Activated CD4-positive, alpha-beta T cell treated with anti-CD3 and anti-CD28 coated beads for 36 hours (primary cell): ENCODE measurements at regions of chr17 and their contacts with region 1.

Region 1: GRCh38 chr17:65100316-65101140 is 36.6 kb upstream of the RGS9 start:
- DNase-seq: peak; percentile 87
- ATAC-seq: peak; percentile 70
- H3K4me3 Mint-ChIP-seq: peak overlapping the region; percentile 78
- H3K27ac Mint-ChIP-seq: peak overlapping the region; percentile 96
- H3K4me1 Mint-ChIP-seq: peaks cover 24% of the 10 kb centered on the region
- H3K27me3 Mint-ChIP-seq: peaks cover 2% of the 10 kb centered on the region

Region 2: DNA sequence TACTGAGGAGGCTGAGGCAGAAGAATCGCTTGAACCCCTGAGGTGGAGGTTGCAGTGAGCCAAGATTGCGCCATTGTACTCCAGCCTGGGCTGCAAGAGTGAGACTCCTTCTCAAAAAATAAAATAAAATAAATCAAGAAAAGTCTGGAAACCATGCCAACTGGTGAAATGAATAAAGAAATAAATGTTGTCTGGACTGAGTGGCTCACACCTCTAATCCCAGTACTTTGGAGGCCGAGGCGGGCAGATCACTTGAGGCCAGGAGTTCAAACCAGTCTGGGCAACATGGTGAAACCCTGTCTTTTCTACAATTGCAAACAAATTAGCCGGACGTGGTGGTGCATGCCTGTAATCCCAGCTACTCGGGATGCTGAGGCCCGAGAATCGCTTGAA is 180.5 kb before region 1 on chr17:
- CTCF ChIA-PET with region 1: no interaction called
- POLR2A ChIA-PET with region 1: no interaction called
- intact Hi-C with region 1: loop called (anchors 1 to 5 kb)
- DNase-seq: no peak
- ATAC-seq: no peak
- H3K4me3 Mint-ChIP-seq: peak overlapping the region; percentile 73
- H3K27ac Mint-ChIP-seq: peak overlapping the region; percentile 70
- H3K4me1 Mint-ChIP-seq: peaks cover 7% of the 10 kb centered on the region
- H3K27me3 Mint-ChIP-seq: no peaks in the 10 kb centered on the region

Region 3: DNA sequence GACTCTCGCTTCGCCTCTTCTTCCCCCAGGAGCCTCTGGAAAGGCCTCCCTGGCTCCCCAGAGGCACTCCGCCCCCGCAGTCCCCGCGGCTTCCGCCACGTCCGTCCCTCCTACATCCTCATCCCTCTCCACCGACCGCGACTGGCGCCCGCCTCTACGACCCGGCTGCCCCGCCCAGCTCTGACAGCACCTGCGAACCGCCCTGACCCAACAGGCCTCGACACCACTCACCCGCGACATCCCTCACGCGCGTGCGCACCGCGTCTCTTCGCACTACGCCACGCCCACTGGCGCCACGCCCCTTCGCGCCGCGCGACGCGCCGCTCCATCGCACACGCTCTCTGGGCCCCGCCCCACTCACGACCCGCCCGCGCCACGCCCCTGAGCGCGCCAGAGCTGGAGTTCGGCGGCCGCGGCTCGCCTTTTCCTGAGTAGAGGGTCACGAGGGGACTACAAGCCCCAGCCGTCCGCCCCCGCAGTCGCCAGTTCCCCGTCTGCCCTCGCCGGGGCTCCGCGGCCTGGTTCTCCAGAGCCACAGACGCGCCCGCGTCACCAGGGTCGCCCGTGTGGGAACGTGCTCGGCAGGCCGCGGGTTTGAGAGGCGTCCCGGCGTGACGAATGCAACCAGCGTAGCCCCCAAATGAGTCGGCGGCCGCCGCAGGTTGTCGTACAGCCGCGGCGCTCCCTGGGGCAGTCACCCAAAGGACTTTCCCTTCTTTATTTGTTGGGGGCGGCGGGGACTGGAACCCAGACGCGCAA is 125.0 kb before region 1 on chr17:
- CTCF ChIA-PET with region 1: interaction called, 6 read pairs
- POLR2A ChIA-PET with region 1: interaction called, 5 read pairs
- intact Hi-C with region 1: loop called (anchors 1 kb)
- DNase-seq: peak; percentile 97
- ATAC-seq: peak; percentile 80
- H3K4me3 Mint-ChIP-seq: peak overlapping the region; percentile 81
- H3K27ac Mint-ChIP-seq: peak overlapping the region; percentile 98
- H3K4me1 Mint-ChIP-seq: peaks cover 59% of the 10 kb centered on the region
- H3K27me3 Mint-ChIP-seq: no peaks in the 10 kb centered on the region

Region 4: DNA sequence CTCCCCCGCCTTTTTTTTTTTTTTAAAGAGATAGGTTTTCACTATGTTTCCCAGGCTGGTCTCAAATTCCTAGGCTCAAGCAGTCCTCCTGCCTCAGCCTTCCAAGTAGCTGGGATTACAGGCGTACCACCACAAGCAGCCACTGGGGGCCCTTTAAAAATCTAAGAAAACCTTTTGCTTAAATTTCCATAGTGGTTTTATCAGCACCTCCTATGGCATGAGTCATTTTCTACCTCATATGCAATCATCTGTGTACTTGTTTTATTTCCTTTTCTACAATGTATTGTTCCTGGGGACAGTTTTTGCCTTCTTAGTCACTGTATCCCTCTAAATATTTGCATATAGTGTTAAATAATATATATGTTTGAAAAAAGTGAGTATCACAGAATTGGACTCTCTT is 73.2 kb before region 1 on chr17:
- CTCF ChIA-PET with region 1: interaction called, 4 read pairs
- POLR2A ChIA-PET with region 1: no interaction called
- intact Hi-C with region 1: loop called (anchors 1 kb)
- DNase-seq: peak; percentile 75
- ATAC-seq: peak; percentile 72
- H3K4me3 Mint-ChIP-seq: peak overlapping the region; percentile 60
- H3K27ac Mint-ChIP-seq: peak overlapping the region; percentile 91
- H3K4me1 Mint-ChIP-seq: peaks cover 81% of the 10 kb centered on the region
- H3K27me3 Mint-ChIP-seq: no peaks in the 10 kb centered on the region

Region 5: DNA sequence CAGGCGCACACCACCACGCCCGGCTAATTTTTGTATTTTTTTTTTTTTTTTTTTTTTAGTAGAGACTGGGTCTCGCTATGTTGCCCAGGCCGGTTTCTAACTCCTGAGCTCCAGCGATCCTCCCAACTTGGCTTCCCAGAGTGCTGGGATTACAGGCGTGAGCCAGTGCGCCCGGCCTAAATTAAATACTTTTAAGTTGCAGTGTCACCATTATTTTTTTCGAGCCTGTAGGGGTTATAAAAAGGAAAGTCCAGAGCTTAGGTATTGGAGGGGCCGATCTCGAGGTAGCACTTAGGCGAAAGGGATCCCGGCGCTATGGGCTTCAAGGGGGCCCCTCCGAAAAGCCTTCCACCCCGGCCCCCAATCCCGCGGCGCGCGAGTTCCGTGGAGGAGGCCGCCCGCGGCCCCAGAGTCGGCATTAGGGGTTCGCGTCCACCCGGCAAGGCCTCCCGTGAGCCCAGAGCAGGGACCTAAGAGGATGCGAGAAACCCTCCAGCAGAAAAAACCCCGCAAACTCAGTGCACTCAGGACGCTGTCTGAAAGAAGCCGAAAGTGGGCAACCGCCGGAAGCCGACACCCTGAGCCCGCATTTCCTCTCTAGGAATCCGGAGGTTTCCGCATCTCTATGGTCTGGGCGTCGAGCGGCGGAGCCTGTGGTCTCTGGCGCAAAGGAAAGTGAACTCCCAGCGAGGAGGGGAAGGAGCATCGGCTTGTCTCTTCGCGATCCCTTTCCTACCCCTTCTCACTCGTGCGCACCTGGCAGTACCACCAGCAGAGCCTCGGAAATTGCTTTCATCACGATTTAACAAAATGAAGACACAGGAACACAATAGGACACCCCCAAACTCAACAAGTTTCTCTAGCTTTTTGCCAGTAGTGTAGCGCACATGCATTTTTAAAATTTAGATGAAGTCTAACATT is 22.6 kb after region 1 on chr17:
- CTCF ChIA-PET with region 1: interaction called, 6 read pairs
- POLR2A ChIA-PET with region 1: no interaction called
- intact Hi-C with region 1: loop called (anchors 1 kb)
- DNase-seq: peak; percentile 89
- ATAC-seq: peak; percentile 69
- H3K4me3 Mint-ChIP-seq: peak overlapping the region; percentile 70
- H3K27ac Mint-ChIP-seq: peak overlapping the region; percentile 98
- H3K4me1 Mint-ChIP-seq: peaks cover 22% of the 10 kb centered on the region
- H3K27me3 Mint-ChIP-seq: peaks cover 6% of the 10 kb centered on the region

Region 6: GRCh38 chr17:65198653-65199382 is 98.3 kb after region 1 on chr17:
- CTCF ChIA-PET with region 1: interaction called, 10 read pairs
- POLR2A ChIA-PET with region 1: no interaction called
- intact Hi-C with region 1: loop called (anchors 1 to 2 kb)
- DNase-seq: no peak
- ATAC-seq: peak; percentile 70
- H3K4me3 Mint-ChIP-seq: no peak overlapping the region
- H3K27ac Mint-ChIP-seq: no peak overlapping the region
- H3K4me1 Mint-ChIP-seq: peaks cover 15% of the 10 kb centered on the region
- H3K27me3 Mint-ChIP-seq: no peaks in the 10 kb centered on the region